ENCODE measurements at regions of chr20 and their contacts with region 1.

Region 1: GRCh38 chr20:19661717-19662636 is 96.1 kb upstream of the RIN2 start:
- DNase-seq: peak; percentile 73
- H3K4me3 Mint-ChIP-seq: no peak overlapping the region
- H3K27ac Mint-ChIP-seq: no peak overlapping the region
- H3K4me1 Mint-ChIP-seq: no peaks in the 10 kb centered on the region
- H3K27me3 Mint-ChIP-seq: peaks cover 59% of the 10 kb centered on the region
- CTCF ChIP-seq: peak; percentile 99

Region 2: GRCh38 chr20:18412221-18412901 is 1249.6 kb before region 1 on chr20:
- CTCF ChIA-PET with region 1: interaction called, 14 read pairs
- POLR2A ChIA-PET with region 1: no interaction called
- intact Hi-C with region 1: loop called (anchors 1 kb)
- DNase-seq: no peak
- H3K4me3 Mint-ChIP-seq: no peak overlapping the region
- H3K27ac Mint-ChIP-seq: no peak overlapping the region
- H3K4me1 Mint-ChIP-seq: no peaks in the 10 kb centered on the region
- H3K27me3 Mint-ChIP-seq: no peaks in the 10 kb centered on the region
- CTCF ChIP-seq: no peak

Region 3: GRCh38 chr20:19205977-19206396 is 456.0 kb before region 1 on chr20:
- CTCF ChIA-PET with region 1: interaction called, 128 read pairs
- POLR2A ChIA-PET with region 1: no interaction called
- intact Hi-C with region 1: loop called (anchors 1 kb)
- DNase-seq: peak; percentile 69
- H3K4me3 Mint-ChIP-seq: no peak overlapping the region
- H3K27ac Mint-ChIP-seq: no peak overlapping the region
- H3K4me1 Mint-ChIP-seq: no peaks in the 10 kb centered on the region
- H3K27me3 Mint-ChIP-seq: peaks cover 25% of the 10 kb centered on the region
- CTCF ChIP-seq: peak; percentile 84

Region 4: GRCh38 chr20:19628570-19629169 is 33.3 kb before region 1 on chr20:
- CTCF ChIA-PET with region 1: interaction called, 95 read pairs
- POLR2A ChIA-PET with region 1: no interaction called
- intact Hi-C with region 1: loop called (anchors 1 kb)
- DNase-seq: peak; percentile 87
- H3K4me3 Mint-ChIP-seq: no peak overlapping the region
- H3K27ac Mint-ChIP-seq: peak overlapping the region; percentile 49
- H3K4me1 Mint-ChIP-seq: no peaks in the 10 kb centered on the region
- H3K27me3 Mint-ChIP-seq: no peaks in the 10 kb centered on the region
- CTCF ChIP-seq: peak; percentile 84

Region 5: GRCh38 chr20:19673575-19673974 is 11.6 kb after region 1 on chr20:
- CTCF ChIA-PET with region 1: interaction called, 13 read pairs
- POLR2A ChIA-PET with region 1: interaction called, 3 read pairs
- intact Hi-C with region 1: no loop called
- DNase-seq: peak; percentile 27
- H3K4me3 Mint-ChIP-seq: no peak overlapping the region
- H3K27ac Mint-ChIP-seq: no peak overlapping the region
- H3K4me1 Mint-ChIP-seq: no peaks in the 10 kb centered on the region
- H3K27me3 Mint-ChIP-seq: peaks cover 50% of the 10 kb centered on the region
- CTCF ChIP-seq: no peak

Region 6: GRCh38 chr20:19757487-19758132 is 95.6 kb after region 1 on chr20:
- CTCF ChIA-PET with region 1: no interaction called
- POLR2A ChIA-PET with region 1: no interaction called
- intact Hi-C with region 1: no loop called
- DNase-seq: peak; percentile 68
- H3K4me3 Mint-ChIP-seq: peak overlapping the region; percentile 81
- H3K27ac Mint-ChIP-seq: peak overlapping the region; percentile 70
- H3K4me1 Mint-ChIP-seq: peaks cover 35% of the 10 kb centered on the region
- H3K27me3 Mint-ChIP-seq: no peaks in the 10 kb centered on the region
- CTCF ChIP-seq: no peak